Head of caudate nucleus (tissue), 42 donors: ENCODE measurements at regions of chrX and their contacts with region 1.

Region 1: GRCh38 chrX:18931972-18932371 is 51.9 kb downstream of the PHKA2 start:
- DNase-seq: peak in 17 of 42 donors; percentile 1 to 60 (median 18)

Region 2: DNA sequence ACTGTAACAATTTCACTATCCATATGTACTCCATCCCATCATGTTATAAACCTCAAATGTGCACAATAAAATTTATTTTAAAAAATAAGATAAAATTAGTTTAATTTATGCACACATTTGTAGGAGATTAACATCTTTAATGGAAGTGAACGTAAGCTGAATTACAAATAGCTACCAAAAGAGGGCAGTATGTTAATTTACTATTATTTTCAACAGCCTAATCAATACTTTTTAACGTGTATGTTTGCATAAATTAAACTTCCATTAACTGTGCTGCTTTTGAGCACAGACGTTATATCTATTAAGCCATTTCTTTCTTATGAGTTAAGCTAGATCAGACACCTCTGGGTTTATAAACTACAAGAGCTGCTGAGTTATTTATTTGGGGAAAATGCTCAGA is 108.4 kb after region 1 on chrX:
- intact Hi-C with region 1: no loop called
- DNase-seq: no peak

Region 3: DNA sequence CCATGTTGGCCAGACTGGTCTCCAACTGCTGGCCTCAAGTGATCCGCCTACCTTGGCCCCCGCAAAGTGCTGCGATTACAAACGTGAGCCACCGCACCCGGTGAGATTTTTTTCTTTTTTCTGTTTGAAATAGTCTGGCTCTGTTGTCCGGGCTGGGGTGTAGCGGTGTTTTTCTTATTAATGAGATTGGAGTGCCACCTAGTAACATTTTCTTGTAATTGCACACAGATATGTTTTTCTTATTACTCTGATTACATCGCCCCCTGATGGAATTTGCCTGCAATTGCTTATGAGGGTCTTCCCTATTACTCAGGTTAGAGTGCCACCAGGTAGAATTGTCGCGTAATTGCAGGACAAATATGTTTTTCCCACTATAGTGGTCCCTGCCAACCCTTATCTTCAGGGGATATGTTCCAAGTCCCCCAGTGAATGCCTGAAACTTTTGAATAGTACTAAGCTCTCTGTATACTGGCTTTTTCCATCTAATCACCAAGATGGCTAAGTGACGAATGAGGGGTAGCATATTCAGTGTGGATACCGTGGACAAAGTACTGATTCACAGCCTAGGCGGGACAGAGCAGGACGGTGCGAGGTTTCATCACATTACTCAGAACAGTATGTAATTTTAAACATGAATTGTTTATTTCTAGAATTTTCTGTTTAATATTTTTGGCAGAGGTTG is 403.1 kb after region 1 on chrX:
- intact Hi-C with region 1: loop called (anchors 10 kb)
- DNase-seq: no peak